OCI-LY7 (cell line): ENCODE measurements at regions of chr10 and their contacts with region 1.

Region 1: GRCh38 chr10:122446668-122447423 is 7.6 kb upstream of the ARMS2 start:
- DNase-seq: no peak
- H3K4me3 ChIP-seq: no peak overlapping the region
- H3K27ac ChIP-seq: no peak overlapping the region
- H3K4me1 ChIP-seq: no peaks in the 10 kb centered on the region
- CTCF ChIP-seq: no peak

Region 2: DNA sequence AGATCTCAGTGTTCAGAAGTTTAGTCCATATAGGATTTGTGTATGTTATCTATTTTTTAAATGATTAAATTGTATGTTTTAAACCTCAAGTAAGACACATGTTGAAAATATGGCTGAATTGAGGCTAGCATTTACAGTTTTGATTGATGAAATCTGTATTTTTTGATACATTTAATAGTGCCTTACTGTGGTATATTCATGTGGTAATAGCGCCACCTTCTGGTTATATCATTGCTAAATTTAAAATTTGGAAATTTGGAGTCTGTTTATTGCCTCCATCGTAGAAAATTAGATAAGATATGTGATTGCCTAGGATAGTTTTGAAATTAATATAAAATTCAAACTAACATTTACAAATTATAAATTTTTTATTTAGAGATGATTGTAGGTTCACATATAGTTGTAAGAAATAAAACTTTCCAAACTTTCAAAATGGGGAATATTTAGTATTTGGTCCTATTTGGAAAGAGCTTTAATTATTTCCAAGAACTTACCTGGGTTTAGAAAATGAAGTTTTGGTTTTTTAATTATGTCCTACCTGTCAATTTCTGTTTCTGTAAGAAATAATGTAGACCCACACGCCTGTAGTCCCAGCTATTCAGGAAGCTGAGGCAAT is 11.5 kb before region 1 on chr10:
- CTCF ChIA-PET with region 1: no interaction called
- POLR2A ChIA-PET with region 1: no interaction called
- intact Hi-C with region 1: no loop called
- DNase-seq: peak; percentile 76
- H3K4me3 ChIP-seq: no peak overlapping the region
- H3K27ac ChIP-seq: no peak overlapping the region
- H3K4me1 ChIP-seq: no peaks in the 10 kb centered on the region
- CTCF ChIP-seq: peak; percentile 97

Region 3: GRCh38 chr10:122565728-122566206 is 118.9 kb after region 1 on chr10:
- CTCF ChIA-PET with region 1: no interaction called
- POLR2A ChIA-PET with region 1: no interaction called
- intact Hi-C with region 1: loop called (anchors 10 kb)
- DNase-seq: peak; percentile 57
- H3K4me3 ChIP-seq: no peak overlapping the region
- H3K27ac ChIP-seq: no peak overlapping the region
- H3K4me1 ChIP-seq: no peaks in the 10 kb centered on the region
- CTCF ChIP-seq: peak; percentile 84